Stomach (tissue), 19 donors: ENCODE measurements at regions of chr21 and their contacts with region 1.

Region 1: GRCh38 chr21:33924079-33924765 is 8.6 kb upstream of the ATP5PO start:
- DNase-seq: peak; percentile 94 to 95
- H3K4me3 ChIP-seq: peak overlapping the region in 1 of 4 donors; percentile 6
- H3K27ac ChIP-seq: peak overlapping the region in 1 of 5 donors; percentile 73
- H3K4me1 ChIP-seq: peaks cover 0 to 12% (median 9%) of the 10 kb centered on the region in 4 donors
- H3K27me3 ChIP-seq: no peaks in the 10 kb centered on the region
- CTCF ChIP-seq: peak in 5 of 7 experiments; percentile 78 to 95 (median 92)
- EP300 ChIP-seq: no peak
- POLR2A ChIP-seq: no peak

Region 2: DNA sequence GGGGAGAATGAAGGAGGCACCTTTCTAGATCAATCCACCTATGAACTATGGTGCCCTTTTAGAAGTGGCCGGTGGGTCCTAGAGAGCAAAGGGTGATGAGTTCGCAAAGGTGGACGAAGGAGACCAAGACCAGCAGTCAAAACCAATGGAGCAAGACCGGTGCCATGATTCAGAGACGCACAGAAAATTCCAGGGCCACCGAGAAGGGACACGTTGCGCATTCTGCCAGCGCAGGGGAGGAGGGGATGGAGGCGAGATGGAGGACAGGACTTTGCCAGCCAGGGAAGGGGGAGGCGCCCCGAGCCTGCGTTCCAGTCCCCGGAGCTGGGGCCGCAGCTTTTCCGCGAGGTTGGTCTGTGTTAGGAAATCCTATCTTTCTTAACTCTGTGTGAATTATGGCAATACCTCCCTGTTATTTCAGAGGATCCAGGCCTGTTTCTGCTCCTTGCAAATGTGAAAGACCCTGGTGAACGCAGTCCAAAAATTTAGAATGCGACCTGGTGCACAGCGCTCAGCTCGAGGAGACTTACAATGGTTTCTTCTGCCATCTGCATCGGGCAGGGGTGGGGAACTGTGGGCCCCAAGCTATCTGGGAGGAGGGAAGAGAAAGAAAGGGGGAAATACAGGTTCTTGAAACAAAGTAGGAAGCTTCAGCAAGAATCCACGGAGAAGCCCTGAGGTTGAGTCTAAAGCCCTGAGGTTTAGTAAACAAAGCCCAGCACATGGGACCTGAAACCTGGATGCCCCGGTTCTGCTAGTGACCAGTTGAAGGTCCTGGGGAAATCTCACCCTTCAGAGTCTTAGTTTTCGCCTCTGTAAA is 278.5 kb after region 1 on chr21:
- intact Hi-C with region 1: loop called (anchors 5 kb)
- DNase-seq: peak in 1 of 2 donors; percentile 62
- H3K4me3 ChIP-seq: peak overlapping the region; percentile 37 to 51 (median 44)
- H3K27ac ChIP-seq: peak overlapping the region in 4 of 5 donors; percentile 69 to 84 (median 72)
- H3K4me1 ChIP-seq: peaks cover 6 to 78% (median 54%) of the 10 kb centered on the region in 4 donors
- H3K27me3 ChIP-seq: no peaks in the 10 kb centered on the region
- CTCF ChIP-seq: no peak
- EP300 ChIP-seq: no peak
- POLR2A ChIP-seq: no peak

Region 3: GRCh38 chr21:34345091-34345871 is 421.1 kb after region 1 on chr21:
- intact Hi-C with region 1: loop called (anchors 5 kb)
- DNase-seq: peak in 1 of 2 donors; percentile 35
- H3K4me3 ChIP-seq: no peak overlapping the region
- H3K27ac ChIP-seq: peak overlapping the region in 4 of 5 donors; percentile 58 to 70 (median 59)
- H3K4me1 ChIP-seq: peaks cover 0 to 30% (median 0%) of the 10 kb centered on the region in 4 donors
- H3K27me3 ChIP-seq: no peaks in the 10 kb centered on the region
- CTCF ChIP-seq: no peak
- EP300 ChIP-seq: no peak
- POLR2A ChIP-seq: no peak